ENCODE measurements at regions of chr5 and their contacts with region 1.

Region 1: DNA sequence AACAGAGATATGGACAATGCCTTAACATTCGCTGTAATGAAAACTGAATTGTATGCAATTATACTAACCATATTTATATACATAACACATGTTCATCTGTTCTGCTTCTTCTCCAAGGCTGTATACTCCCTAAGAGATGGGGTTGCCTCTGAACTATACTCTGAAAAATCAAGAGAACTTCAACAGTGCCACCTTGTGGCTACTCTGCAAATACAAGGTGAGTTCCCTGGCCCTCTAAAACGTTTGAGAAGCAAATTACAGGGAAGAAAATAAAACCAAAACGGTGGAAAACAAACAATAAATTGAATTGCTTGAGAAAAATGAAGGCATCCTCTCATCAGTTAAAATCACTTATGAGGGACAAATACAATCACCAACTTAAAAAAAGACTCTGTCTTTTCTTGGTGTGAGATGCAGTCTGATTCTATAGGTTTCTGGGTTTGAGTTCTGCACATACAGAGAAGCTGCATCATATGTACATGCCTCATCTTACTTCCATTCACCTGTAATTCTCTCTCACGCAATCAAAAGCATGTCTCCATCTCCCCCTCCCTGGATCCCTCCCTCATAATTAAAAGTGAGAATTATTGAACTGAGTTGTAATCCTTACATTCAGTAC is 98.6 kb downstream of the FBXW11 start:
- DNase-seq: peak in 7 of 9 donors; percentile 9 to 55 (median 45)
- ATAC-seq: peak; percentile 88
- H3K4me3 ChIP-seq: no peak overlapping the region
- H3K4me3 Mint-ChIP-seq: no peak overlapping the region
- H3K27ac ChIP-seq: no peak overlapping the region
- H3K27ac Mint-ChIP-seq: peak overlapping the region in 3 of 9 donors; percentile 0 to 75 (median 50)
- H3K4me1 ChIP-seq: peaks cover 0 to 23% of the 10 kb centered on the region in 2 donors
- H3K4me1 Mint-ChIP-seq: peaks cover 25 to 54% (median 48%) of the 10 kb centered on the region in 7 donors
- H3K27me3 ChIP-seq: no peaks in the 10 kb centered on the region
- H3K27me3 Mint-ChIP-seq: no peaks in the 10 kb centered on the region

Region 2: GRCh38 chr5:171207256-171207847 is 700.5 kb before region 1 on chr5:
- CTCF ChIA-PET with region 1: no interaction called
- POLR2A ChIA-PET with region 1: no interaction called
- intact Hi-C with region 1: loop called in 1 of 2 experiments (anchors 5 kb)
- DNase-seq: peak in 4 of 9 donors; percentile 5 to 18 (median 12)
- ATAC-seq: no peak
- H3K4me3 ChIP-seq: no peak overlapping the region
- H3K4me3 Mint-ChIP-seq: no peak overlapping the region
- H3K27ac ChIP-seq: no peak overlapping the region
- H3K27ac Mint-ChIP-seq: no peak overlapping the region
- H3K4me1 ChIP-seq: no peaks in the 10 kb centered on the region
- H3K4me1 Mint-ChIP-seq: no peaks in the 10 kb centered on the region
- H3K27me3 ChIP-seq: no peaks in the 10 kb centered on the region
- H3K27me3 Mint-ChIP-seq: peaks cover 5 to 16% (median 7%) of the 10 kb centered on the region in 5 donors

Region 3: GRCh38 chr5:171418316-171418981 is 489.4 kb before region 1 on chr5:
- CTCF ChIA-PET with region 1: no interaction called
- POLR2A ChIA-PET with region 1: no interaction called
- intact Hi-C with region 1: loop called (anchors 1 kb)
- DNase-seq: peak in 7 of 9 donors; percentile 17 to 68 (median 20)
- ATAC-seq: peak; percentile 66
- H3K4me3 ChIP-seq: peak overlapping the region; percentile 45
- H3K4me3 Mint-ChIP-seq: peak overlapping the region; percentile 58 to 86 (median 73)
- H3K27ac ChIP-seq: no peak overlapping the region
- H3K27ac Mint-ChIP-seq: no peak overlapping the region
- H3K4me1 ChIP-seq: peaks cover 5 to 15% of the 10 kb centered on the region in 2 donors
- H3K4me1 Mint-ChIP-seq: peaks cover 6 to 20% (median 11%) of the 10 kb centered on the region in 7 donors
- H3K27me3 ChIP-seq: peaks cover 3 to 4% of the 10 kb centered on the region in 2 donors
- H3K27me3 Mint-ChIP-seq: peaks cover 11 to 33% (median 19%) of the 10 kb centered on the region in 5 donors

Region 4: DNA sequence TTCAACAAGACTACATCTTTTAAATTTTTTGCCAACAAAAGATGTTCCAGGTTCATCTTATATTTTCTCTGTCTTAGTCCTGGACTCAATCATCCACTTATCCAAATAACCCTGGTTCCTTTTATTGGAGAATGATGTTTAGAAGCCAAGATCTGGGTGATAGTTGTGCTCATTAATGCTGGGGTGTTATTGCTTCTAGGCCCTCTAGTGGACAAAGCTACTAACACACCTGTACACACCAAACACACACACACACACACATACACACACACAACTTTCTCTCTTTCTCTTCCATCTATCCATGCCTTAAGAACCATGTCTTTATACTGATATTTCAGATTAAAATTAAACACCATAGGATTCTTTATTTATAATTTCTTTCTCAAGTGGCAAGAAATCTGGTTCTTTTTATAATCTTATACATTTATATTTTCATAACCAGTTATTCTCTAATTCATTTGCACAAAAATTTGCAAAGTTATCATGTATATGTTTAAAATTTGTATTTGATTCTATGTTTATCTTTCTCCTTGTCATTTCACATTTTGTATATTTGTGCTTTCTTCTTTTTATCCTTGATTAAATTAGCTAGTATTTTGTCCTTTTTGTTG is 301.3 kb before region 1 on chr5:
- CTCF ChIA-PET with region 1: no interaction called
- POLR2A ChIA-PET with region 1: no interaction called
- intact Hi-C with region 1: loop called in 1 of 2 experiments (anchors 10 kb)
- DNase-seq: no peak
- ATAC-seq: no peak
- H3K4me3 ChIP-seq: no peak overlapping the region
- H3K4me3 Mint-ChIP-seq: no peak overlapping the region
- H3K27ac ChIP-seq: no peak overlapping the region
- H3K27ac Mint-ChIP-seq: no peak overlapping the region
- H3K4me1 ChIP-seq: no peaks in the 10 kb centered on the region
- H3K4me1 Mint-ChIP-seq: no peaks in the 10 kb centered on the region
- H3K27me3 ChIP-seq: no peaks in the 10 kb centered on the region
- H3K27me3 Mint-ChIP-seq: peaks cover 10 to 48% (median 34%) of the 10 kb centered on the region in 5 donors

Region 5: DNA sequence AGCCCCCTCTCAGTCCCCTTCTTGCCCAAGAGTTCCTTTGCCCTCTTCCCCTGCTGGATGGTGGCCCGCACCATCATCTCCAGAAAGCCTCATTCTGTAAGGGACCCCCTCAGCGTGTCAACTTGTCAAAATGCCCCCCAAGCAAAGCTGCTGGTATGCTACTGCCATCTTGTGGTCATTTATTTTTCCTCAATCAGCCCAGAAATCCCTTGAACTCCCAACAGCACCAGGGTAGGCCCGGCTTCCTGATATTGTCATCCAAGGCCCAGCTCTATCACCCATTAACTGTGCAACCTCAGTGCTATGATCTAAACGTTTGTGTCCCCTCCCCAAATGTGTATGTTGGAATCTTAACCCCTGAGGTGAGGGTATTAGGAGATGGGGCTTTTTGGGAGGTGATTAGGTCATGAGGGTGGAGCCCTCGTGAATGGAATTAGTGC is 151.8 kb after region 1 on chr5:
- CTCF ChIA-PET with region 1: interaction called, 21 read pairs
- POLR2A ChIA-PET with region 1: no interaction called
- intact Hi-C with region 1: loop called (anchors 1 to 5 kb)
- DNase-seq: peak in 1 of 9 donors; percentile 36
- ATAC-seq: no peak
- H3K4me3 ChIP-seq: no peak overlapping the region
- H3K4me3 Mint-ChIP-seq: peak overlapping the region in 4 of 10 donors; percentile 4 to 42 (median 12)
- H3K27ac ChIP-seq: no peak overlapping the region
- H3K27ac Mint-ChIP-seq: peak overlapping the region; percentile 3 to 91 (median 54)
- H3K4me1 ChIP-seq: peaks cover 0 to 7% of the 10 kb centered on the region in 2 donors
- H3K4me1 Mint-ChIP-seq: peaks cover 22 to 68% (median 33%) of the 10 kb centered on the region in 7 donors
- H3K27me3 ChIP-seq: no peaks in the 10 kb centered on the region
- H3K27me3 Mint-ChIP-seq: no peaks in the 10 kb centered on the region

Region 6: DNA sequence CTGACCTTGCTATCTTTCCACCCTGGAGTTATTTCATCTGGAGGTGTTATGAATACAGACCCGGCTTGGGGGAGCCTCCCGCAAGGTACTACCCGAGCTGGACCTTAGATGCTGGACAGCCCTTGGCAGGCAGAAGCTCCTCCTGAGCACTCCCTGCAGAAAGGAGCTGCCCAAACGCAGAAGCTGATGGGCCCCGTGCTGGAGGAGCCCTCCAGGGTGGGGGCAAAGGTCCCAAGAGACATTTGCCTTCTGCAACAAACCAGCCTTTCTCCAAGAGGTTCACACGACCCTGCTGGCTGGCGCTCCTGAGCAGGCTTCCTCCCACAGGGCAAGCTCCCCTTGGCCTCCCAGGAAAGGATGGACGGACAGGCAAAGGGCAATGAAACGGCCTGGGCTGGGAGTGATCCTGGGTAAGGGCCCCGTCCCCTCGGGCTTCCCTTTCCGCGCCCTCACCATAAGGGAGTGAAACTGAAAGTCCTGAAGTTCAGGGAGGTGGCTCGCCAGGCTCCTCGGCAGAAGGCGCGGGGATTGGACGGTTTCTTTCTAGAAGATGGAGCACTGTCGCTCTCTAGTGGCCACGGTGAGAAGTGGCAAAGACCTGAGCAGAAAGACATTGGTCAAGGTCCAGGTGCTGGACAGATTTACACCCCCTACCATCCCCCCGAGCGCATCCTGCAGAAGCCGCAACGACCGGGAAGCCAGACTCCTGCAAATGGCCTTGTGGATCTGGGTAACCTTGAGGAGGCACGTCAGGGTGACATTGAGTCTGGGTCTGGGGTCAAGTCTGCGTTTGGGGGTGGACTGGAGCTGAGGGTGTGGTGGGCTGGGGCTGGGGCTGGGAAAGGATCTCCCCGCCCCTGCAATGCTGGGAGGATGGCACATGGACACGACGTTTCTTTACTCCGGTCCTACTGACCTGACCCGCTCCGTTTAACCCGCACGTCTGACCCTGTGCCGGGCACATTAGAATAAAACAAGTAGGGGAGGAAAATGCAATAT is 789.6 kb after region 1 on chr5:
- CTCF ChIA-PET with region 1: no interaction called
- POLR2A ChIA-PET with region 1: no interaction called
- intact Hi-C with region 1: loop called in 1 of 2 experiments (anchors 1 kb)
- DNase-seq: peak; percentile 64 to 85 (median 80)
- ATAC-seq: peak; percentile 98
- H3K4me3 ChIP-seq: peak overlapping the region; percentile 78
- H3K4me3 Mint-ChIP-seq: peak overlapping the region; percentile 77 to 96 (median 94)
- H3K27ac ChIP-seq: peak overlapping the region; percentile 72
- H3K27ac Mint-ChIP-seq: peak overlapping the region; percentile 88 to 98 (median 95)
- H3K4me1 ChIP-seq: peaks cover 5 to 10% of the 10 kb centered on the region in 2 donors
- H3K4me1 Mint-ChIP-seq: peaks cover 0 to 24% (median 20%) of the 10 kb centered on the region in 7 donors
- H3K27me3 ChIP-seq: no peaks in the 10 kb centered on the region
- H3K27me3 Mint-ChIP-seq: peaks cover 6 to 26% (median 15%) of the 10 kb centered on the region in 5 donors

Measured in naive thymus-derived CD4-positive, alpha-beta T cell (primary cell).